Activated naive CD4-positive, alpha-beta T cell treated with anti-CD3 and anti-CD28 coated beads, Interleukin-2, amount 10 ng/mL, durations not matched to agents 7 days and 5 days (primary cell): ENCODE measurements at regions of chr12 and their contacts with region 1.

Region 1: DNA sequence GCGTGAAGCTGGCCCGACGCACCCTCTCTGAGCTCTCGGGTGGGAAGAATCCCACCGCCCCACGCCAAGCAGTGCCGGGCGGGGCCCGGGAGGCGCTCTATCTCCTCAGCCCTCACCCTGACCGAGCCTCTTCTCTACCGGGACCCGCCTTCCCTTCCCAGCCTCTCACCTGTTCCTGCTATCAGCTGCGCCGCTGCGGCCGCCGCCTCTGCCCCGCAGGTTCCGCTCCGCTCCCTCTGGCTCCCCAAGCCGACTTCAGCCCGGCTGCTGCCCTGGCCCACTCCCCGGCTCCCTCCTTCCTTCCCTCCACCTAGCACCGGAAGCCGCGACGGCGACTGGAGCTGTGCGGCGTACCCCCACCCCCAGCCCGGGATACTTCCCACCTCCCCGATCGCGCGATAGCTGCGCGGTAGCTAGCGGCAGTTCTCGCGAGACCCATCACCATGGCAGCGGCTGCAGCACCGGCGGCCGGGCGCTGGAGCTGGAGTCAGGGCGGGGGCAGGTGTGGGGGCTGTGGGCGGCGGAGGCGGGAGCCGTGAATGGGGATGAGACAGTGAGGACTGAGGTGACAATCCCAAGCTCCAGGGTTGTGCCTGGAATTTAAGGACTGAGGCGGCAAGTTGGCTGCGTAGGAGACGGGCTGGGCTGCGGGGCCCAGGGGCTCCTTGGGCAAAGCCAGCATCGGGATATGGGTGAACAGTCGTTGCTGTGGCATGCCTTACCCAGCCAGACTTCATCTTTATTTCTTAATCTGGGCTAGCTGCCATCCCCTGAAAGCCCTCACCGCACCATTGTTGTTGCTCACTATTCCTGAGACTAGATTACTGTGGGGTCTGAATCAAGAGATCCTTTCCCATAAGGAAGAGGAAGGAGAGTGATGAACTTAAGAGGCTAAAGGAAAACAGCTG is at the start of gene ARF3:
- DNase-seq: peak; percentile 97
- H3K4me3 Mint-ChIP-seq: peak within 1 kb of the TSS; percentile 90
- H3K27ac Mint-ChIP-seq: peak within 1 kb of the TSS; percentile 81
- H3K4me1 Mint-ChIP-seq: peaks cover 37% of the 10 kb centered on the region
- H3K27me3 Mint-ChIP-seq: peaks cover 43% of the 10 kb centered on the region

Region 2: DNA sequence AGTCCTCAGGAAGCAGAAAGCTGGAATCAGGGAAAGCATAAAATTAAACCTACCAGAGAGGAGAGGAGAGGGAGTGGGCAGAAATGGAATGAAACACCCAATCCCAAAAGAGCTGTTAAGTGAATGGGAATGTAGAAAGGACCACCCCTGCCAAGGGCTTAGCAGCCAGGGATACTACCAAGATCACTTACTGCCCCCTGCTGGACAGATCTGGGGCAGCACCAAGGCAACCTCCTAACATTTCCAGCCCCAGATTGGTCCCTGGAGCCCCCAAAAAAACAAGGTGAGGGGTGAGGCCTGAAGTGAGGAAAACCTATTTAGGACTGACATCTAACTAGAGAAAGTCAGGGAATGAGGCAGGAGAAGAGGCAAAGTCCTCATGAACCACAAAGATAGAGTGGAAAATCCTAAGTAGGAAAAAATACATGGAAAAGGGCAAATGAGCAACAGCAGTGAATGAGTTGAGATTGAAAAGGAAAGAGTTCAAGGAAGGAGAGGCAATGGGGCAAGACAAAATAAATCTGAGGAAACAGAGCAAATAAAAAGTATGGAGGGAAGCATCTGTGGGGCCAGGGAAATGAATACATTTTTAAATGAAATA is 20.9 kb before region 1 on chr12:
- CTCF ChIA-PET with region 1: interaction called, 13 read pairs
- DNase-seq: peak; percentile 88
- H3K4me3 Mint-ChIP-seq: no peak overlapping the region
- H3K27ac Mint-ChIP-seq: no peak overlapping the region
- H3K4me1 Mint-ChIP-seq: peaks cover 11% of the 10 kb centered on the region
- H3K27me3 Mint-ChIP-seq: no peaks in the 10 kb centered on the region

Region 3: DNA sequence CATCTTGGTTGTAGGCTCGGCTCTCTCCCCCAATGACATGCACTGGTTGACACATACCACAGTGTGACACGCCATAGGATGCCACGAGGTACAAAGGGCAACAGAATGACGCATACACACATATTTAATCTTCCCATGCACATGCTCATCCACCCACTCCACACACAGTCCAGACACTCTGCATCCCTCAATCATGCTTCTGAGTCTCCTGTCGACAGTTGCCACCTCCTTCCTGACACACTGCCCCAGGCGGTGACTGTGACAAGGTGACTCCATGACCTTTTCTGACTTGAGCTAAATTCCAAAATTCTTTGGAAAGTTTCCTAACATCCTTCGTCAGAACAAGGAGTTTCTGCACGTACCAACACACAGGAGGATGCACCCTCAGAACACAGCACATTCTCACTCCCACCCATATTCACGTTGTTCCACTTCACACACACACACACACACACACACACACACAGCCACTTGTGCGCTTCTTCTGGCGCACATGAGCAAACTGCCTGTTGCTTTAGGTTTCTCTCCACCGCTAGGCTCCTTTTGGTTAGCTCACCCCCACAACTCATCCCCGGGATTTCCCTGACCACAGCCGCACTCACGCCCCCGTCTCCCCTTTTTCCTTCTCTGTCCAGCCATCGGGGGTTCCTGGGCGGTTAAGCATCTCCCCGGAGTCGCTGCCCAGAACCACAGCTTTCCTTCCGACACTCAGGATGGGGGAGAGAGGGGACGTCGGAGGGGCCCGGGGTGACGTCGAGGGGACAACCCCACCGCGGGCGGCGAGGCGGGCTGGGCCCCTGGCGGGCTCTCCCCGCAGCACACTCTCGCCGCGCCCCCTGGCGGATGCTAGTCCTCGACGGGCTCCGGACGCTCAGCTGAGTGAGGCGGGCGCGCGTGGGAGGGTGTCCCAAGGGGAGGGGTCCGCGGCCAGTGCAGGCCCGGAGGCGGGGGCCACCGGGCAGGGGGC is 20.2 kb after region 1 on chr12:
- CTCF ChIA-PET with region 1: interaction called, 14 read pairs
- DNase-seq: peak; percentile 83
- H3K4me3 Mint-ChIP-seq: peak overlapping the region; percentile 24
- H3K27ac Mint-ChIP-seq: no peak overlapping the region
- H3K4me1 Mint-ChIP-seq: peaks cover 51% of the 10 kb centered on the region
- H3K27me3 Mint-ChIP-seq: peaks cover 100% of the 10 kb centered on the region